Mammary epithelial cell (primary cell): ENCODE measurements at regions of chr5 and their contacts with region 1.

Region 1: DNA sequence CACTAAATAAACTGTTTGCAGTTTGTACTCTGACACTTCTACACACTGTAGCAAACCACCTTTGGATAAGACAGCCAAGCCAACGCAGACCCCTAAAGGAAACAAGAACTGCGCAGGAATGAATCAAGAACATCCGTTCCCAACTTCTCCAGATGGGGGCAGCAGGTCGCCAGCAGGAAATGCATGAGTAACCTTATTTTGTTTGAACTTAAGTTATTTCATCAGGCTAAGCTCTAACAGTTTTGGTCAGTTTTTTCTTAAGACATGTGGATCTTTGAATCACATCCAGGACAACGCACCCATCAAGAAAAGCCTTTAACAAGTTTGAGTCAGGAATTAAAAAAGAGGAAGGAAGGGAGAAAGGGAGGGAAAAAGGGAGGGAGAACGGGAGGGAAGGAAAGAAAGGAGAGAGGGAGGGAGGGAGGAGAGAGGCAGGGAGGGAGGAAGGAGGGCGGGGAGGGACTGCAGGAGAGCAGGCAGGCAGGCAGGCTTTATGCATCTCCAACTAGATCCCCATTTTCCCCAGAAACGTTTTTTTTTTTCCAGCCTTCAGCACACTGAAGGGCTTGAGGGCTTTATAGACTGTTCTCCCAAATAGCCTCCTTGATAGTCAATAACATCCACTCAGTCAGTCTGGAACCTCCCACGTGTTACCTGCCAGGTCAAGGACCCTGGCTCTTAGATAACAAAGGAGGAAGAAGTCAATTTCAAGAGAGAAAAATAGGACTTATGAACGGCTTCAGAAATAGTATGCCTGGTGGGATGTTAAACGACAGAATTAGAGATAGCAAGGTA is 22.2 kb downstream of the BHMT start:
- DNase-seq: peak; percentile 58
- H3K4me3 ChIP-seq: peak overlapping the region; percentile 16 to 28 (median 23)
- H3K27ac ChIP-seq: peak overlapping the region; percentile 13
- H3K4me1 ChIP-seq: peaks cover 5% of the 10 kb centered on the region
- H3K27me3 ChIP-seq: no peaks in the 10 kb centered on the region
- CTCF ChIP-seq: peak; percentile 84 to 88

Region 2: DNA sequence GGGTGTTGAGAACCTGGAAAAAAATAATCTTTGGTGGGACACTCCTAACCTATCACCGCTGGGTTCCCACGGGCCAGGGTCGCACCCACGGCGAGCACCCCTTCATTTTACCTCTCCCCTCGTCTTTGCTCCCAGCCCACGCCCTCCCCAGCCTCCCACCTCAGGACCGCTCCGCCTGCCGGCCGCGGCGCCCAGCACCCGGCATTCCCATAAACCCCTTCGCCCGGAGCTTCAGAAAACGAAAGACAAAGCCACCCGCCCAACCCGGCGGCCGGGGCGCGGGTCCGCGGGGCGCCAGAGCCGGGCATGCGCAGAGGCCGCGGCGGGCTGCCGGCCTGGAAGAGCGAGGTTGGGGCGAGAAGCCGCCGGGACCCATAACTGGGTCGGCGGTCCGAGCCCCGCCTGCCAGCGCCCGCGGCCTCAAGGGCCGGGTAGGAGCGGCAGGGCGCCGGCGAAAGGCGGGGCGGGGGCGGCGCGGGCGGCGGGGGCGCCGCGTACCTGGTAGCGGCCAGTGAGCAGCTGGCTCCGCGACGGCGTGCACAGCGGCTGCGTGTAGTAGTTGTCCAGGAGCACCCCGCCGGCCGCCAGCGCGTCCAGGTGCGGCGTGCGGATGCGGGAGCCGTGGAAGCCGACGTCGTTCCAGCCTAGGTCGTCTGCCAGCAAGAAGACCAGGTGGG is 149.3 kb before region 1 on chr5:
- CTCF ChIA-PET with region 1: no interaction called
- dilution Hi-C with region 1: no loop called
- in situ Hi-C with region 1: no loop called
- intact Hi-C with region 1: loop called (anchors 2 kb)
- DNase-seq: peak; percentile 82
- H3K4me3 ChIP-seq: peak overlapping the region; percentile 66 to 79 (median 67)
- H3K27ac ChIP-seq: peak overlapping the region; percentile 44
- H3K4me1 ChIP-seq: peaks cover 26% of the 10 kb centered on the region
- H3K27me3 ChIP-seq: no peaks in the 10 kb centered on the region
- CTCF ChIP-seq: peak; percentile 4 to 52

Region 3: GRCh38 chr5:79200573-79201183 is 66.8 kb after region 1 on chr5:
- CTCF ChIA-PET with region 1: interaction called, 4 read pairs
- dilution Hi-C with region 1: no loop called
- in situ Hi-C with region 1: no loop called
- intact Hi-C with region 1: loop called (anchors 5 kb)
- DNase-seq: no peak
- H3K4me3 ChIP-seq: no peak overlapping the region
- H3K27ac ChIP-seq: no peak overlapping the region
- H3K4me1 ChIP-seq: no peaks in the 10 kb centered on the region
- H3K27me3 ChIP-seq: no peaks in the 10 kb centered on the region
- CTCF ChIP-seq: peak; percentile 45 to 46

Region 4: DNA sequence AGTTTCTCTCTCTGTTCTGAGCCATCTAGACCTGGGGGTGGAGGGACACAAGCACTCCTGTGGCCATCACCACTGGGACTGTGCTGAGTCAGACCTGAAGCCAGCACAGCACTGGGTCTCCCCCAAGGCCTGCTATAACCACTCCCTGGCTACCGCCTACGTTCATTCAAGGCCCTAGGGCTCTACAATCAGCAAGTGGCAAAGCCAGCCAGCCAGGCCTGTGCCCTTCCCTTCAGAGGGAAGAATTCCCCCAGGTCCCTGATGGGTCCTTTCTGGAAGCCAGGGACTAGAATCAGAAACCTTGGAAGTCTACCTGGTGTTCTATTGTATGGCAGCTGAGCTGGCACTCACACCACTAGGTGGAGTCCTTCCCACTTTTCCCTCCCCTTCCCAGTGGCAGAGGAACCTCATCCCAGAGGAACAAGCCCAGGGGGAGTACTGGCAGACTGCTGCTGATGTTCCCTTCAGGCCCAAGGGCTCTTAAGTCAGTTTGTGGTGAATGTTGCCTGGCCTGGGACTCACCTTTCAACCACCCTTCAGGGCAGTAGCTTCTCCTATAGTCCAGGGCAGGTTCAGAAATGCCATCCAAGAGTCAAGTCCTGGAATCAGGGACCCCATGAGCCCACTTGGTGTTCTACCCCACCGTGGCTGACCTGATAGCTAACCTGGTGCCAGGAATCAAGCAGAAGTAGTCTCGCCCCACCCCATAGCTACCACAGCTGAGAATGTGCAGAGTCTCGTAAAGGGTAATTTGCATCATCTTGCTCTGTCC is 122.1 kb after region 1 on chr5:
- CTCF ChIA-PET with region 1: no interaction called
- dilution Hi-C with region 1: no loop called
- in situ Hi-C with region 1: no loop called
- intact Hi-C with region 1: loop called (anchors 5 kb)
- DNase-seq: peak; percentile 36
- H3K4me3 ChIP-seq: no peak overlapping the region
- H3K27ac ChIP-seq: no peak overlapping the region
- H3K4me1 ChIP-seq: peaks cover 16% of the 10 kb centered on the region
- H3K27me3 ChIP-seq: no peaks in the 10 kb centered on the region
- CTCF ChIP-seq: peak; percentile 47 to 78

Region 5: DNA sequence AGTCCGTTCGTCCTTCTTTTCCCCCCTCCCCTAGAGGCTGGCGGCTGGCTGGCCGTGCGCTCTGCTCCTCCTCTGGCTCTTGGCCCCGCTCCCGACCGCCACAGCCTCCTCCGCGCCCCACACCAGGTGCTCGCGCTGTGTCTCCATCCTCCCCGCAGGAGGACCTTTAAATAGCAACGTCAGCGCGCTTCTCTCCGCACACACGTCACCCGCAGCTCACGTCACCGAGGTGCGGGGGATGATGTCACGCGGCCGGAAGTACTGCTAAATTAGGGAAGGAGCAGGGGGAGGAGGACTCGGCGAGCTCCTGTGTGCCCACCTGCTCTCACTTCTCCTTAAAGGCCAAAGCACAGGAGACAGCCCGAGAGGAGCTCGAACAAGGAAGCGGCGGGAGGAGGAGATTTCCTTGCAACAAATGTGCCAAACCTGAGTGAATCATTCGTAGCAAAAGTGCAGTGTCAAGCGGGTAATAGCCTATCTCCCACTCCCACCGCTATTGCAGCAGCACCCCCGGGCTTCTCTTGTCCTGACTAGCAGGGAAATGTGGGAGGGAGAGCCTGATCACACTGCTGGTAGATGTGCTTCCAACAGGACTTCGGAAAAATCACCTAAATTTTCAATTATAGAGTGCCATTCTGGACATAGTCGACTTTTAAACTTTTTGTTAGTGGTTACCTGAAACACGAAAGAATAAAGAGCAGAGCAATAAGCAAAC is 380.7 kb after region 1 on chr5:
- CTCF ChIA-PET with region 1: no interaction called
- dilution Hi-C with region 1: no loop called
- in situ Hi-C with region 1: no loop called
- intact Hi-C with region 1: loop called (anchors 5 kb)
- DNase-seq: peak; percentile 95
- H3K4me3 ChIP-seq: peak overlapping the region; percentile 73 to 77 (median 74)
- H3K27ac ChIP-seq: peak overlapping the region; percentile 85
- H3K4me1 ChIP-seq: peaks cover 15% of the 10 kb centered on the region
- H3K27me3 ChIP-seq: no peaks in the 10 kb centered on the region
- CTCF ChIP-seq: no peak

Region 6: DNA sequence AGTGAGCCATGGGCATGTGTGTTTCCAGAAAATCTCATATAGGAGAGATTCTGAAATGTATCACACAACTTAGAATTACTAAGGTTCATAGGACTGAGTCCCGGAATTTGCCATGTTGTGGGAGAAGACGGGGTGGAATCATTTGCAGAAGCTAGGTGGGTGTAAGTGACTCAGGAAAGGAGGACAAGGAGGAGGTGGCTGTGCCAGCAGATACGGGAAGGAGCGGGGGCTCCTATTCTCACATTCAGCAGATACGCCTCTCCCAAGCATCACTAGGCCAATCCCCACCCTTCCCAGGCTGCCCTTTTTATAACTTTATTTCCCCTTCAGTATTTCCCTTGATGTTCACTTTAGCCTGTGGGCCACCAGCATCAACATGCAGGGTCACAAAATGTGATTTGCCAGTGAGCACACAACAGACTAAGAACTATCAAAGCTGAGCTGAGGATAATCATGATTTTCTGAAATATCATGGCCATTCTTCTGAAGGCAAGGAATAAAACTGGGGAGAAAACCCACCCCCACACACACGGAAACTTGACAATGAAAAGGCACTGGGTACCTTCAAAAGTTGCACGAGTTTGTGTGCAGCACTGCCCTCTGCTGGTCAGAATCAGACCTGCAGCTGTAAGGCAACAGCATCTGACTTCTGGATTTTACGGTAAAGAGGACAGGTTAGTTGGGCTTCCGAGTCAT is 724.0 kb after region 1 on chr5:
- CTCF ChIA-PET with region 1: no interaction called
- dilution Hi-C with region 1: no loop called
- in situ Hi-C with region 1: no loop called
- intact Hi-C with region 1: loop called (anchors 5 kb)
- DNase-seq: peak; percentile 45
- H3K4me3 ChIP-seq: no peak overlapping the region
- H3K27ac ChIP-seq: no peak overlapping the region
- H3K4me1 ChIP-seq: peaks cover 7% of the 10 kb centered on the region
- H3K27me3 ChIP-seq: peaks cover 3% of the 10 kb centered on the region
- CTCF ChIP-seq: peak; percentile 93 to 97